ENCODE measurements at regions of chr13 and their contacts with region 1.

Region 1: GRCh38 chr13:39144941-39145533 is 106.8 kb downstream of the NHLRC3 start:
- DNase-seq: no peak

Region 2: DNA sequence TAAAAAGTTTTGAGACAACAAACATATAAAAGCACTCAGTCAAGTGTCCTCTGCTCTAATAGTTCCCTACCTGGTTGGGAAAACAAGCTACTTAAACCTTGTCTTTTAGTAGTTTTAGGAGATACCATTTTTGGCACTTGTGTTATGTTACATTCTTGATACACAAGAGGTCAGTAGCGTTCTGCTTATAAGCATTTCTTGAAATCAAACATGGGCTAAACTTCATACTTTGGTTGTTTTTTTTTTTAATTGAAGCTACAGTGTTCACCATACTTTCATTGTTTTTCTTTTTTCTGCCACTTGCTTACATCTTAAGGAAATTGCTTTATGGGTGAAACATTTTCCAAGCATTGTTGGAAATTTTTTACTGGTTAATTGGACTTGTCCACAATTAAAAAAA is 93.9 kb before region 1 on chr13:
- intact Hi-C with region 1: loop called (anchors 5 kb)
- DNase-seq: no peak

Region 3: DNA sequence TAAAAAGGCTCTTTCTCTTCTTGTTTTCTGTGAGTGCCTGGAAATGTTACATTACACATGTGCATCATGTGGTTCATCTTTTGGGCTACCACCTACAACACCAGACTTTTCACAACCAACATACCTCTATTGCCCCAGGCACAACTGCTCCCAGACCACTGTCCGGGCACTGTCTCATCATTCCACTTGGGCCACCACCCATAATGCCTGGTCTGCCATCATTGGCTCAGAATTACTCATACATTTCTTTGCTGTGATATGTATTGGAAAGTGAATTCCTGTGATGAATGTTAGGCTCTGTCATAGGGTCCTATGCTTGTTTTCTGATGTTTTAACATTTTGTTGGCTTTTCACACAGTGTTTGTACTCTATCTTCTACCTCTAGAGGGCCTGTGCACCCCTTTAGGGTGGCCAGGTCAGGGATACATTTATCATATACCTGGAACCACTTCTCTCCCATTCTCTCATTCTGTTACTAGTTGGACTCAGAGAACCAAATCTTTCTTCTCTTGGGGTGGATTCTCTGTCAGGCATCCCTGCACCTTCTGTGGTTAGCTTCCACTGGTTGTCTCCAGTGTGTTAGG is 66.0 kb after region 1 on chr13:
- intact Hi-C with region 1: no loop called
- DNase-seq: no peak

Region 4: GRCh38 chr13:39415008-39415802 is 270.2 kb after region 1 on chr13:
- intact Hi-C with region 1: loop called (anchors 10 kb)
- DNase-seq: no peak

Region 5: DNA sequence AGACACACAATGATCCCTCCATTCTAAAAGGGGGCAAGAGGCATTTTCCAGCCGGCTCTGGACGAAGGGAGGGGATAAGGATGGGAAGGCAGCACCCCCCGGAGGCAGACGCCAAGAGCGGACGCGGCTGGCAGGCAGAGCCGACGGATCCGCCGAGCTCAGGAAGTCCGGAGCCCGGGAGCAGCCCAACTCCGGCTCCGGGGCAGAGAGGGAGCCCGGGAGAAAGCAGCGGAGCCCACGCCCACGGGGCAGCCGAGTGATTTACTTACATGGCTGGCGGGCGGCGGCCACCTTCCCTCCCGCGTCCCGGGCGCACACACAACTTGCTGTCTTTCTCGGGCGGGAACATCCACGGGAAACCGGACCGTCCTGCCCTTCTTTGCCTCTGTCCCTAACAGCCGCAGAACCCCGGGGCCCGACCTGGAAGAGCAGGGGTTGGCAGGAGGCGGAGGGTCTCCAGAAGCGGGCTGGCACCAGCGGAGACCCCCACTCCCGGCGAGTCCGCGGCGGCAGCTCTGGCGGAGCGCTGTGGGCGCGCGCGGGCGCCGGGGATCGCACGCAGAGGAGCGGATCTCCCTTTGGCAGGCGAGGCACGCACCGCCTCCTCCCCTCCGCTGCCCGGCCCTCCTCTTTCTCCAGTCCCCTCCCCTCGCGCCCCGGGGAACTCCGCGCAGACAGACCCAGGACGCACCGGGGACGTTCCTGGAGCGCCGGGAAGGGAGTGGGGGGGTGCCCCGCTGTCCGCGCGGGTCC is 457.8 kb after region 1 on chr13 and contains the start of gene LHFPL6:
- intact Hi-C with region 1: loop called (anchors 5 kb)
- DNase-seq: peak; percentile 93
- total RNA-seq, gene LHFPL6: 68.9 TPM

Region 6: GRCh38 chr13:39616087-39616694 is 471.2 kb after region 1 on chr13:
- intact Hi-C with region 1: loop called (anchors 2 kb)
- DNase-seq: no peak

Measured in cardiac septum (tissue), 1 donor.